ENCODE measurements at regions of chr13 and their contacts with region 1.

Region 1: DNA sequence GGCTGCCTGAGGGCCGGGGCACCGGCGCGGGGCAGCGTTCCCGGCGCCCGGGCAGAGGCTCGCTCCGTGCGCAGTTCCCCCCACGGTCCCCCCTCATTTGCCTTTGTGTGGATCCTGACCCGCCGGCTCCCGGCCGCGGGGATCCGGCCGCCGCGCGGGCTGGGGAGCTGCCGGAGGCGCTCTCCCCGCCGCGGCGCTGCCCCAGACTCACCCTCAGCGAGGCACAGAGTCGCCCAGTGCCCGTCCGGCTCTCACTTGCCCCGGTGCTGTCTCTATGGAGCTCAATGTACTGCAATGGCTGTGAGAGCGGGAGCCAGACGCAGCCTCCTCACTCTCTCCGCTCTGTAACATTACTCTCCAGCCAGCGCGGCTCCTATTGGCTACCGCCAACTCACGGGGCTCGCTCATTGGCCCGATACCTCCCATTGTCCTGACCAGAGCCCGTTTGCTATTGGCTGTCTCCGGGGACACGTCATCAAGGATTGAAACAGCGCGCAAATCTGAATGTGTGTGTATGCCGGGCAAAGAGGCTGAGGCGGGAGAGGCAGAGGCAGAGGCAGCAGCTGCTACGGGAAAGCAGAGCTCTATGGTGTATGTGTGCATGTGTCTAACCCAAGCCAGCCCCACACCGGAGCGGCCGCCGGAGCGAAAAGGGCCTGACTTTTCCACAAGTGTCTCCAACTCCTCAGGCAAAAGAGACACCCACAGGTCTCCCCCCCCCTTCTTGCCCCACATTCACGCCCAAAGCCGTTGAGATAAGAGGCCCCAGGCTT is at the start of gene HMGB1:
- DNase-seq: peak; percentile 97
- ATAC-seq: peak; percentile 91
- H3K4me3 ChIP-seq: peak within 1 kb of the TSS; percentile 84
- H3K27ac ChIP-seq: peak within 1 kb of the TSS; percentile 70
- H3K4me1 ChIP-seq: peaks cover 24% of the 10 kb centered on the region
- H3K27me3 ChIP-seq: no peaks in the 10 kb centered on the region
- CTCF ChIP-seq: no peak
- total RNA-seq, gene HMGB1: 497 and 567 TPM in 2 replicates

Region 2: GRCh38 chr13:30132623-30133553 is 332.9 kb before region 1 on chr13:
- CTCF ChIA-PET with region 1: interaction called, 4 read pairs
- POLR2A ChIA-PET with region 1: no interaction called
- intact Hi-C with region 1: loop called (anchors 1 kb)
- DNase-seq: peak; percentile 88
- ATAC-seq: peak; percentile 89
- H3K4me3 ChIP-seq: no peak overlapping the region
- H3K27ac ChIP-seq: no peak overlapping the region
- H3K4me1 ChIP-seq: peaks cover 7% of the 10 kb centered on the region
- H3K27me3 ChIP-seq: no peaks in the 10 kb centered on the region
- CTCF ChIP-seq: peak; percentile 83

Region 3: DNA sequence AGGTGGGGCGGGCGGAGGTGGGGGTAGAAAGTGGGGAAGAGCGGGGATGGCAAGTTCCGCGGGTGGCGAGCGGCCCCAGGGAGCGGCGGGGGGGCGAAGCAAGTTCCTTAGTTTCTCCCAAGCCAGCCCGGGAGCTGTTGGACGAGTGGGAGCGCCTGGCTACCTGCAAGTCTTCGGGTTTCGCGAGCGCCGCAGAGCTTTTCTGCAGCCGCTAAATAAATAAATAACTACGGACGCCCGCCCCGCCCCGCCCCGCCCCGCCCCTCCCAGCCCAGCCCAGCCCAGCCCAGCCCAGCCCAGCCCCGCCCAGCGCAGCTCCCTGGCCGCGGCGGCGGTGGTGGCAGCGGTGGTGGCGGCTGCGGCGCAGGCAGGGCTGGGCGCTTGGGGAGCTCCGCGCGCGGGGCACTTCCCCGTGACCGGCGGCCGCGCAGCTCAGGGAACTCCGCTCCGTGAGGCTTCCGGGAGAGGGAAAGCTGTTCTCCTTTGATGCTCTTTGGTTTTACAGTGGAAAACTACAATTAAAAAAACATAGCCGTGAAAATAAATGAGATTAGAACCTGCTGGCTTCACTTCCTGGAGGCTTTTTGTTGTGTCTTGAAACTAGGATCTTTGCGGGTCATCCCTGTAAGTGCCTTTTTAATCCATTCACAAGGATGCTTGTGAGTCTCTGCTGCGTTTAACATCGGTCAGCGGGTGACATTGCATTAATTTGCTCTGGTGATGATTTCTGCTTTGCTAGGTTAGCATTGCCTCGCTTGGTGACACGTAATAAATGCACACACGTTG is 43.5 kb before region 1 on chr13 and contains the start of gene UBE2L5:
- CTCF ChIA-PET with region 1: no interaction called
- POLR2A ChIA-PET with region 1: no interaction called
- intact Hi-C with region 1: loop called (anchors 2 kb)
- DNase-seq: peak; percentile 62
- ATAC-seq: peak; percentile 87
- H3K4me3 ChIP-seq: peak within 1 kb of the TSS; percentile 82
- H3K27ac ChIP-seq: peak within 1 kb of the TSS; percentile 42
- H3K4me1 ChIP-seq: peaks cover 16% of the 10 kb centered on the region
- H3K27me3 ChIP-seq: no peaks in the 10 kb centered on the region
- CTCF ChIP-seq: no peak
- total RNA-seq, gene UBE2L5: not detected in 2 replicates

Region 4: GRCh38 chr13:30572859-30573275 is 107.1 kb after region 1 on chr13:
- CTCF ChIA-PET with region 1: no interaction called
- POLR2A ChIA-PET with region 1: no interaction called
- intact Hi-C with region 1: loop called (anchors 1 kb)
- DNase-seq: peak; percentile 39
- ATAC-seq: peak; percentile 46
- H3K4me3 ChIP-seq: peak overlapping the region; percentile 69
- H3K27ac ChIP-seq: no peak overlapping the region
- H3K4me1 ChIP-seq: peaks cover 34% of the 10 kb centered on the region
- H3K27me3 ChIP-seq: no peaks in the 10 kb centered on the region
- CTCF ChIP-seq: peak; percentile 47

Region 5: GRCh38 chr13:30639671-30640070 is 173.9 kb after region 1 on chr13:
- CTCF ChIA-PET with region 1: no interaction called
- POLR2A ChIA-PET with region 1: no interaction called
- intact Hi-C with region 1: no loop called
- DNase-seq: no peak
- ATAC-seq: no peak
- H3K4me3 ChIP-seq: no peak overlapping the region
- H3K27ac ChIP-seq: no peak overlapping the region
- H3K4me1 ChIP-seq: no peaks in the 10 kb centered on the region
- H3K27me3 ChIP-seq: no peaks in the 10 kb centered on the region
- CTCF ChIP-seq: no peak

Region 6: DNA sequence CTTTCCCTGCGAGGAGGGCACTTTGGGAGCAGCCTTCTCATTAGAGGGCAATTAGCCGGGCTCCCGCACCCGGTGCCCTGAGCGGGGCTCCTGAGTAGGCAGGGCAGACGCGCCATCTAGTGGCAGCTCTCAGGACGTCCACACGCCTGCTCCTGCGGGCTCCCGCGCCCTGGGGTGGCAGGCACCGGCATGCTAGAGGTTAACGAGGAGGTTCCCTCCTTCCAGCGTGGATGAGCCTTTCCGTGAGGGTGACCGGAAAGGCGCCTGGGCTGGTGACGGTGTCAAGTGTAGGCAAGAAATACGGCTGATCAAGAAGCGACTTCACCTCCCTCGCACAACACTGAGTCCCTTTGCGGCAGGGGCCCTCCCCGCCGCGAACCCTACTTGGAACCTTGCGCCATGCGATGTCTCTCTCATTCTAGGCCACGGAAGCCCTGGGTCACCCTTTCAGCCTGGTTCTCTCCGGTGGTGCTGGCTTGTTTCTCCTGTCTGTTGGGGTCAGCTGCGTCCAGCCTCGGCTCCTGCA is 337.2 kb after region 1 on chr13:
- CTCF ChIA-PET with region 1: no interaction called
- POLR2A ChIA-PET with region 1: no interaction called
- intact Hi-C with region 1: loop called (anchors 5 kb)
- DNase-seq: peak; percentile 73
- ATAC-seq: peak; percentile 97
- H3K4me3 ChIP-seq: peak overlapping the region; percentile 26; the same call in 1 of the 2 replicates
- H3K27ac ChIP-seq: no peak overlapping the region
- H3K4me1 ChIP-seq: no peaks in the 10 kb centered on the region; the same call in 1 of the 2 replicates
- H3K27me3 ChIP-seq: no peaks in the 10 kb centered on the region
- CTCF ChIP-seq: peak; percentile 89